H1 (cell line): ENCODE measurements at regions of chr4 and their contacts with region 1.

Region 1: DNA sequence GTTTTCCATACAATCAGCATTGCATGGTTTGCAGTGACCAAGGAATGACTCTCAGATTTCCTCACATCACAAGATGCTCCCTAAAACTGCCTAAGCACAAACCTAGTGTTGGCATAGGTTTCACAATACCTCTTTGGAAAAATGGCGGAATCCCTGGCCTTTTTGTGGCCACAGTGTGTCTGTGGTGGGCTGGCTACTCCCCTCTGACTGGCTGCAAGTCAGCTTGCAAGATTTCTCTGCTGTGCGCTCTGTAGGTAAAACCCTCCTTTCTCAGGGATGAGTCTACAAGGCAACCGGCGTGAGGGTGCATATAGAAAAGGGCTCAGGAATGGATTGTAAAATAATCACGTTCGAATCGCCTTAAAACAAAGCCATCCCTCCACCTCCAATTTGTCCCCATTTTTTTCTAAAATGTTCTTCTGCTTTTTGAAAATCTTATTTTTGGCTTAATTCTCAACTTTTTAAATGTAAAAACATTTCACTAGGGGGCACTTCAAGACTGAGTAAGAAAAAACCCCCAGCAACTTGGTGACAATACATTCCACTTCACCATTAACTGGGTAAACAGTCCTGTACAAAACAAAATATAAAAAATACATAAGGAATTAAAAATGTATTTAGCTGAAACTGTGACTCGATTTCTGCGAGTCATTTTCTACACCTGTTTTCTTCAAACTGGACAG is 235.6 kb downstream of the STIM2 start:
- DNase-seq: no peak
- H3K4me3 ChIP-seq: no peak overlapping the region
- H3K27ac ChIP-seq: no peak overlapping the region
- H3K4me1 ChIP-seq: peaks cover 2 to 10% (median 9%) of the 10 kb centered on the region in 4 experiments; a peak in 5 of 7 replicates
- H3K27me3 ChIP-seq: no peaks in the 10 kb centered on the region; a peak in 1 of 7 replicates
- CTCF ChIP-seq: peak in 1 of 3 experiments; percentile 2; a peak in 1 of 4 replicates
- EP300 ChIP-seq: no peak
- POLR2A ChIP-seq: no peak
- RAD21 ChIP-seq: peak; percentile 48 to 65

Region 2: DNA sequence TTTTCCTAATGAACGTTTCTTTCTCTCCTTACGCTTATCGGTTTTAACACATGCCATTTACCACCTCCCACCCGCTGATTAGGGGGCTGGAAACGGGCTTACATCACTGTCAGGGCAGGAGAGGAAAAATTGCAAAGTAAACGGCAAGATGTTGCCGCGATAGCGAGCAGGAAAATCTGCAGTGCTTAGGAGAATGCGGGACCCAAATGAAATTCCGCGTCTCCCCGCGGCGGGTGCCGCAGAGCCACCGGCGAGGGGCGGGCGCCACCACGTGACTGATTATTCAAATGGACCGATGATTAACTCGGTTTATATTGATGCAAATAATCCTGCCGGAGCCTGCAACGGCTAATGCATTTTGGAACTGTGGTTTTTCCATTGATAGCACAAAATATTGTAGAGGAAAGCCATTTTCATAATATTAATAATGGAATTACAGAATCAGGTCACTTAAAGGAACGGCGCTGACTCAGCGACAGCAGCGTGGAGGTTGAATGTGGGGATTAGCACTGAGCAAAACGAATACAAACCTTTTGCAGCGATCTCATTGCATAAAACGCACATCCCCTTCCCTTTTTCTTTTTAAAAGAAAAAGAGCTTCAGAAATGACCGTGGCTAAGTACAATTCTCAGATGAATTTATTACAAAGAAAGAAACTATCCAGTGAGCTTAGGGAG is 11.5 kb before region 1 on chr4:
- CTCF ChIA-PET with region 1: interaction called, 12 read pairs
- POLR2A ChIA-PET with region 1: interaction called, 3 read pairs
- DNase-seq: peak in 1 of 2 experiments; percentile 73
- H3K4me3 ChIP-seq: peak overlapping the region; percentile 35 to 63 (median 51)
- H3K27ac ChIP-seq: no peak overlapping the region
- H3K4me1 ChIP-seq: peaks cover 4 to 23% (median 17%) of the 10 kb centered on the region in 4 experiments; a peak in 5 of 7 replicates
- H3K27me3 ChIP-seq: peaks cover 0 to 23% (median 15%) of the 10 kb centered on the region in 4 experiments; a peak in 6 of 7 replicates
- CTCF ChIP-seq: peak; percentile 6 to 28 (median 11); a peak in 3 of 4 replicates
- EP300 ChIP-seq: no peak
- POLR2A ChIP-seq: no peak
- RAD21 ChIP-seq: peak; percentile 57 to 62

Region 3: DNA sequence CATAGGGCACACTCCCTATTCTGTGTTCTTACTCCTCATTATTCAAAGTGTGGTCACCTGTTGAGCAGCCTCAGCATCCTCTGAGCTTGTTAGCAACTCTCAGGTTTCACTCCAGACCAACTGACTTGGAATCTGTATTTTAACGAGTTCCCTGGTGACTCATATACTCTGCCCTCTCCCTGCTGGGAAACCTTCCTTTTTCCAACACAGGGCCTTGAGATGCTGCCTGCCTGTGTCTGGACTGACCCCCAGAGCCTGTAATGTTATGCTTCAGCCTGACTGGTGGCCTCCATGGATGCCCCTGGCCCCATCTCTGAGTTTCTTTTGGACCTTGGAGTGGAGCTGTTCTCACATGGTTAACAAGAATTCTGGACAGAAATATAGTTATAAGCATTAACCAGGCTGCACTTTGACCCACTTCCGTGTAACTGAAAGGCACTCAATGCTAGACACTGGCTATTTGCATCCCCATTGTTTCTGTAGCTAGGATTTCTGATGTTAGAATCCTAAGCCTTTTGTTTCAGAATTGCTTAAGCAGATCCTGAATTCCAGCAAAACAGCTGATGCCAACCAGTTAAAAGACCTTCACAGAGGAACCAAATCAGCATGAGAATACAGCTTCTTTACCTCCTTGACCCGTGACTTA is 27.0 kb after region 1 on chr4:
- CTCF ChIA-PET with region 1: interaction called, 20 read pairs
- POLR2A ChIA-PET with region 1: interaction called, 8 read pairs
- DNase-seq: peak; percentile 56 to 69
- H3K4me3 ChIP-seq: peak overlapping the region in 3 of 4 experiments; percentile 10 to 37 (median 19); a peak in 4 of 8 replicates
- H3K27ac ChIP-seq: peak overlapping the region; percentile 88
- H3K4me1 ChIP-seq: peaks cover 4 to 23% (median 17%) of the 10 kb centered on the region in 4 experiments
- H3K27me3 ChIP-seq: no peaks in the 10 kb centered on the region; a peak in 1 of 7 replicates
- CTCF ChIP-seq: no peak
- EP300 ChIP-seq: peak in 1 of 2 experiments; percentile 87; a peak in 1 of 3 replicates
- POLR2A ChIP-seq: no peak
- RAD21 ChIP-seq: peak; percentile 1 to 3; a peak in 1 of 4 replicates

Region 4: GRCh38 chr4:27184508-27185155 is 88.3 kb after region 1 on chr4:
- CTCF ChIA-PET with region 1: no interaction called
- POLR2A ChIA-PET with region 1: no interaction called
- DNase-seq: no peak
- H3K4me3 ChIP-seq: no peak overlapping the region
- H3K27ac ChIP-seq: no peak overlapping the region
- H3K4me1 ChIP-seq: no peaks in the 10 kb centered on the region
- H3K27me3 ChIP-seq: no peaks in the 10 kb centered on the region
- CTCF ChIP-seq: no peak
- EP300 ChIP-seq: no peak
- POLR2A ChIP-seq: no peak
- RAD21 ChIP-seq: no peak